Left ventricle myocardium superior (tissue), 1 donor: ENCODE measurements at regions of chr12 and their contacts with region 1.

Region 1: GRCh38 chr12:10153271-10154144 is 18.4 kb downstream of the OLR1 start:
- DNase-seq: peak; percentile 79
- ATAC-seq: peak; percentile 96

Region 2: GRCh38 chr12:9948606-9949296 is 204.8 kb before region 1 on chr12:
- intact Hi-C with region 1: no loop called
- DNase-seq: no peak
- ATAC-seq: no peak

Region 3: GRCh38 chr12:10190558-10191388 is 37.3 kb after region 1 on chr12:
- intact Hi-C with region 1: loop called (anchors 5 kb)
- DNase-seq: peak; percentile 51
- ATAC-seq: peak; percentile 98

Region 4: DNA sequence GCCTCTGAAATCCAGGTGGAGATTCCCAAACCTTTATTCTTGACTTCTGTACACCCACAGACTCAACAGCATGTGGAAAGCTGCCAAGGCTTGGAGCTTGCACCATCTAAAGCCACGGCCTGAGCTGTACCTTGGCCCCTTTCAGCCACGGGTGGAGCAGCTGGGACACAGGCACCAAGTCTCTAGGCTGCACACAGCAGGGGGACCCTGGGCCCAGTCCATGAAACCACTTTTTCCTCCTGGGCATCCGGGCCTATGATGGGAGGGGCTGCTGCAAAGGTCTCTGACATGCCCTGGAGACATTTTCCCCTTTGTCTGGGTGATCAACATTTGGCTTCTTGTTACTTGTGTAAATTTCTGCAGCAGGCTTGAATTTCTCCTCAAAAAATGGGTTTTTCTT is 384.2 kb after region 1 on chr12:
- intact Hi-C with region 1: no loop called
- DNase-seq: no peak
- ATAC-seq: no peak